CD14-positive monocyte (primary cell): ENCODE measurements at regions of chr12 and their contacts with region 1.

Region 1: GRCh38 chr12:64494998-64495729 is 43.2 kb downstream of the TBK1 start:
- DNase-seq: no peak
- H3K4me3 ChIP-seq: no peak overlapping the region
- H3K4me3 Mint-ChIP-seq: no peak overlapping the region
- H3K27ac ChIP-seq: no peak overlapping the region
- H3K27ac Mint-ChIP-seq: no peak overlapping the region
- H3K4me1 ChIP-seq: peaks cover 2 to 7% of the 10 kb centered on the region in 2 donors
- H3K4me1 Mint-ChIP-seq: peaks cover 5% of the 10 kb centered on the region
- H3K27me3 ChIP-seq: no peaks in the 10 kb centered on the region
- H3K27me3 Mint-ChIP-seq: peaks cover 0 to 1% (median 0%) of the 10 kb centered on the region in 3 donors
- CTCF ChIP-seq: no peak

Region 2: DNA sequence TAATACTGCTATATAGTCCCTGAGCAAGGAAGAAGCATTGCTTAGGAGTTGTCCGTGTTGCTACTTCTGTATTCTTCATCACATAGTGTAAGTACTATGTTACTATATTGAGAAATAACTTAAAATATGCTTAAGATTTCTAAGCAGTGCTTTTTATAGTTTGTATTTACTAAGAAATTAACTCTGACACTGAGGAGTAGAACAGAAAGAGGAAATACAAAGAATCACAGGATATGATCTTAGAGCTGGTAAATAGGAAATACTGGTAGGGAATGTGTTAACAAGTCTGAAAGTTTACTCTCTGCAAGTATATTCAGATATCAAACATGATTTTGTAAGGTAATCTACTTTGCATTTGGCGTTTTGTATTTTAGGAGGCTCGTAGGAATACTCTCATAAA is 75.5 kb before region 1 on chr12:
- intact Hi-C with region 1: loop called in 1 of 2 experiments (anchors 10 kb)
- DNase-seq: no peak
- H3K4me3 ChIP-seq: no peak overlapping the region
- H3K4me3 Mint-ChIP-seq: no peak overlapping the region
- H3K27ac ChIP-seq: no peak overlapping the region
- H3K27ac Mint-ChIP-seq: no peak overlapping the region
- H3K4me1 ChIP-seq: no peaks in the 10 kb centered on the region
- H3K4me1 Mint-ChIP-seq: no peaks in the 10 kb centered on the region
- H3K27me3 ChIP-seq: no peaks in the 10 kb centered on the region
- H3K27me3 Mint-ChIP-seq: no peaks in the 10 kb centered on the region
- CTCF ChIP-seq: no peak

Region 3: GRCh38 chr12:64560396-64561304 is 65.5 kb after region 1 on chr12:
- intact Hi-C with region 1: no loop called
- DNase-seq: peak; percentile 50 to 70 (median 52)
- H3K4me3 ChIP-seq: no peak overlapping the region
- H3K4me3 Mint-ChIP-seq: peak overlapping the region in 1 of 2 donors; percentile 67
- H3K27ac ChIP-seq: no peak overlapping the region
- H3K27ac Mint-ChIP-seq: peak overlapping the region; percentile 51 to 85 (median 70)
- H3K4me1 ChIP-seq: peaks cover 18 to 20% of the 10 kb centered on the region in 2 donors
- H3K4me1 Mint-ChIP-seq: peaks cover 17% of the 10 kb centered on the region
- H3K27me3 ChIP-seq: no peaks in the 10 kb centered on the region
- H3K27me3 Mint-ChIP-seq: peaks cover 0 to 3% (median 0%) of the 10 kb centered on the region in 3 donors
- CTCF ChIP-seq: no peak

Region 4: DNA sequence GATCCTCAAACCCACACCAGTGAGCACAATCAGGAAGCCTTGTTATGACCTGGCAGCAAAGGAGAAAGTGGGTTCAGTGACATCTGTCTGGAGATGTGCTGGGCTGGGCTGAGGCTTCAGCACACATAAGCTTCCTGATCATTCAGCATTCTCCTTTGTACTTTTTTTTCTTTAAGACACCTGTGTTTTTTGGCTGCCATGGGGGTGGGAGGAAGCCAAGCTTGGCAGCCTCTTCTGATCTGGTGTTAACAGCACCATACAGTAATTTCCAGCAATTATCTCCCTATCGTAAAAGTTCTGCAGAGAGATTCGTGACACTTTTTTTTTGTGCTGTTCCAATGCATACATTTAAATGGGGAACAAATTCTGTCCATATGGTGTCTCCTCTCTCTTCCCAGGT is 76.2 kb after region 1 on chr12:
- intact Hi-C with region 1: no loop called
- DNase-seq: no peak
- H3K4me3 ChIP-seq: no peak overlapping the region
- H3K4me3 Mint-ChIP-seq: no peak overlapping the region
- H3K27ac ChIP-seq: no peak overlapping the region
- H3K27ac Mint-ChIP-seq: no peak overlapping the region
- H3K4me1 ChIP-seq: peaks cover 20% of the 10 kb centered on the region in 2 donors
- H3K4me1 Mint-ChIP-seq: peaks cover 26% of the 10 kb centered on the region
- H3K27me3 ChIP-seq: no peaks in the 10 kb centered on the region
- H3K27me3 Mint-ChIP-seq: peaks cover 0 to 3% (median 2%) of the 10 kb centered on the region in 3 donors
- CTCF ChIP-seq: no peak